ENCODE measurements at regions of chr11 and their contacts with region 1.

Region 1: DNA sequence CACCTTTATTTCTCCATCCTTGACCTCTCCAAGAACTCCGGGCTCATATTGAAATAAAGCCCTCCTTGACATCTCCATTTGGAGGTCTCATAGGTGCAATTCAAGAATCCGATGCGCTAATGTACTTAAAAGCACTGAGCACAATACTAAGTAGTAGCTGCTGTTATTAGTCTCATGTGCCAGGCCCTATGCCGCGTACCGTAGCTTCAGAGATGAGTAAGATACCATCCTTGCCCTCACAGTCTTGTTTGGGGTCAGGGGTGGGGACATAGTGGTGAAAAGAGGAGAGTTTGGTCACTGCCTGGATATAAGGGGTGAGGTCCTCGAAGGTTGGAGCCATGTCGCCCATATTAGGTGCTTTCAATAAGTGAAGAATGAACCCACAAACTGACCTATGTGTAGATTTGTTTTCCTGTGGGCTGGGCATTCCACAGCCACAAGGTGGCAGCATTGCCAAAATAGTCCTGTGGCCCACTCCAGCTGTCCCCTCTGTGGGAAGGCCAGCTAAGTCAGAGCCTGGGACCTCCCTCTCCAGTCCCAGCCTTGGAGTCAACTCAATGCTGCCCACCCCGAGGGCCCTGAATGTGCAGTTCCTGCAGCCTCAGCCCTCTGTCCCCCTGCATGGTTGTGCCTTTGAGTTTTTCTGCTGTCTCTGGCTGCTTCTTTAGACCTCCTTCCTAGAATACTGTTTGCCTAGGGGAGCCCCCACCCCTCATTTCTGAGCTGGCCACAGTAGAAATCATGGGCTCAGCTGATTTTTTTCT is 6.5 kb downstream of the DCPS start:
- DNase-seq: peak; percentile 41
- H3K4me3 Mint-ChIP-seq: no peak overlapping the region
- H3K27ac Mint-ChIP-seq: peak overlapping the region; percentile 13
- H3K4me1 Mint-ChIP-seq: peaks cover 39% of the 10 kb centered on the region
- H3K27me3 Mint-ChIP-seq: no peaks in the 10 kb centered on the region

Region 2: GRCh38 chr11:126224647-126225294 is 85.6 kb before region 1 on chr11:
- intact Hi-C with region 1: no loop called
- DNase-seq: no peak
- H3K4me3 Mint-ChIP-seq: no peak overlapping the region
- H3K27ac Mint-ChIP-seq: no peak overlapping the region
- H3K4me1 Mint-ChIP-seq: no peaks in the 10 kb centered on the region
- H3K27me3 Mint-ChIP-seq: no peaks in the 10 kb centered on the region

Region 3: GRCh38 chr11:126416542-126417090 is 106.2 kb after region 1 on chr11:
- intact Hi-C with region 1: loop called (anchors 1 kb)
- DNase-seq: peak; percentile 59
- H3K4me3 Mint-ChIP-seq: peak overlapping the region; percentile 62
- H3K27ac Mint-ChIP-seq: no peak overlapping the region
- H3K4me1 Mint-ChIP-seq: peaks cover 17% of the 10 kb centered on the region
- H3K27me3 Mint-ChIP-seq: peaks cover 5% of the 10 kb centered on the region